Activated CD8-positive, alpha-beta T cell treated with anti-CD3 and anti-CD28 coated beads for 36 hours (primary cell): ENCODE measurements at regions of chr9 and their contacts with region 1.

Region 1: DNA sequence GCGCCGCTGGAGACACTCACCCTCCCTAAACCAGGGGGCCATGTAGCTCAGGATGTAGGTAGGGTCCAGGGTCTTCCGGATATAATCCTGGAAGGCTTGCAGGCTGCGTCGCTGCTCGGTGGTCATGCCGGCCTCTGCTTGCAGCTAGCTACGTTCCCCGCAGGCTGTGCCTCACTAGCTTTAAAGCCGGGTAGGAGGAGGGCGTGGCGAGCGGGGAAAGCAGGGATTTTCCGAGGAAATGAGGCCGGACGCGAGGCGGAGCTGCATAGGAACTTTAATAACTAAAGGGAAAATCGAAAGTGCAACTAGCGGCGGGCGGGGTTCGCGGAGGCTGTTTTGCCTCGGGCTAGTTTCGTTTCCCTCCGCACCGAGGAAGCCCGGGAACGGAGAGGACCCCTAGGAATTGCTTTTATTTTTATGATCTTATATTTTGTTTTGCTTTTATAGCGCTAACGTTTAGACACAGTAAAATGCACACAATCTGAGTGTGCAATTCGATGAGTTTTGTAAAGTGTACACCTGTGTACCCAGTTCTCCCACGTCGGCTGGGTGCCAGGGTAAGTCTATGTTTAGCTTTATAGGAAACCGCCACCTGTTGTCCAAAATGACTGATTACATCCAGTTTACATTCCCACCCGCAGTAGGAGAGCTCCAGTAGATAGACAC is at the start of gene RIGI:
- DNase-seq: peak; percentile 81
- ATAC-seq: peak; percentile 75
- H3K4me3 Mint-ChIP-seq: peak within 1 kb of the TSS; percentile 85
- H3K27ac Mint-ChIP-seq: peak within 1 kb of the TSS; percentile 85
- H3K4me1 Mint-ChIP-seq: peaks cover 49% of the 10 kb centered on the region
- H3K27me3 Mint-ChIP-seq: no peaks in the 10 kb centered on the region
- CTCF ChIP-seq: peak; percentile 59
- total RNA-seq, gene RIGI: 5.4 to 5.6 TPM

Region 2: DNA sequence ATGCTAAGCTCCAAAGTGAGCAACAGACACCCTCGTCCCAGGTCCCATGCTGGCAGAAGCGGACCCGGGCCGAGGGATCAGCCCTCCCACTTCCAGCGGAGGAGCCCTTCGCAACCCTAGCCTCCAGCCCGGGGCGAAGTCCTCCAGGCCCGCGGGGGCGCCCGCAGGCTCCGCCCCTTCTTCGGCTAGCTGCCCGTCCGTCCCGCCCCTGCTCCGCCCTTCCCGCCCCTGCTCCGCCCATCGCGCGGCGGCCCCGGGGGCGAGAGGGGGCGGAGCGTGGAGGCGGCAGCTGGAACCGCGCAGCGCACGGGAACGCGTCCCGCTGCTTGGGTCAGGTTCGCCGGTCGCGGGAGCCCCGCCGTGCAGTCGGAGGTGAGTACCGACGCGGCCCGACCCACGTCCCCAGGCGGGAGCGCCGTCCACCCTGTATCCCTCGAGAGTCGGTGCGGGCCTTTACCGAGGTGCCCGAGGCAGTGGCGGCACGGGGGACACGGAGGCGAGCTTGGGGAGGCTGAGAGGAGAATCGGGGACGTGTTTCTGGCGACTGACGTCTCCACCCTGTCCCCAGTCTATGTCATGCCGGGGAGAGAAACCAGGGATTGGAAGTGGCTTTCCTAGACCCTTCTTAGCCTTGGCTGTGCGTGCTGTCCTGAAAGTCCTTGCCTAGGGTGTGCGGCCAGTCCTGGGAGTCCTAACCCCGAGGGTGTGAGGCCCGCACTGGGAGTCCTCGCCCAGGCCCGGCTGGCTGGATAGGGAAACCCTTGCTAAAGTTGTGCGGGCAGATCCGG is 141.6 kb before region 1 on chr9 and contains the start of gene ACO1:
- CTCF ChIA-PET with region 1: interaction called, 44 read pairs
- POLR2A ChIA-PET with region 1: no interaction called
- intact Hi-C with region 1: loop called (anchors 1 kb)
- DNase-seq: peak; percentile 83
- ATAC-seq: peak; percentile 97
- H3K4me3 Mint-ChIP-seq: peak within 1 kb of the TSS; percentile 81
- H3K27ac Mint-ChIP-seq: no peak within 1 kb of the TSS
- H3K4me1 Mint-ChIP-seq: peaks cover 17% of the 10 kb centered on the region
- H3K27me3 Mint-ChIP-seq: peaks cover 12% of the 10 kb centered on the region
- CTCF ChIP-seq: no peak
- total RNA-seq, gene ACO1: 15.3 to 15.7 TPM

Region 3: DNA sequence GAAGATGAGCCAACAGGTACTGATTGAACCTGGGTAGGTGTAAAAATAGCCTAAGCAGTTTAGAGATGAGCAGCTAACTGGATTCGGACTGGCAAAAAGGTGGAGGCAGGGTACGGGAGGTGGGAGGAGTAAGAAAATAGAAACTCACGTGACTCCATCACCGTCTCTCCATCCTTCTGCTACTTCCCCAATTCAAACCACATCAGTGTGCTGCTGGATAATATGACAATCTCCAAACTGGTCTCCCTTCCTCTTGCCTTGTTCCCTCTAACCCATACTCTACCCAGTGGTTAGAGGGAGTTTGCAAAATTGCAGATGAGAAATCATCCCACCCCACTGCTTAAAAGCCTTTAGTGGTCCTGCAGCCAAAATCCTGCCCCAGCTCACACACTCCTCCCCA is 42.8 kb before region 1 on chr9:
- CTCF ChIA-PET with region 1: no interaction called
- POLR2A ChIA-PET with region 1: no interaction called
- intact Hi-C with region 1: no loop called
- DNase-seq: no peak
- ATAC-seq: no peak
- H3K4me3 Mint-ChIP-seq: no peak overlapping the region
- H3K27ac Mint-ChIP-seq: no peak overlapping the region
- H3K4me1 Mint-ChIP-seq: no peaks in the 10 kb centered on the region
- H3K27me3 Mint-ChIP-seq: no peaks in the 10 kb centered on the region
- CTCF ChIP-seq: no peak

Region 4: DNA sequence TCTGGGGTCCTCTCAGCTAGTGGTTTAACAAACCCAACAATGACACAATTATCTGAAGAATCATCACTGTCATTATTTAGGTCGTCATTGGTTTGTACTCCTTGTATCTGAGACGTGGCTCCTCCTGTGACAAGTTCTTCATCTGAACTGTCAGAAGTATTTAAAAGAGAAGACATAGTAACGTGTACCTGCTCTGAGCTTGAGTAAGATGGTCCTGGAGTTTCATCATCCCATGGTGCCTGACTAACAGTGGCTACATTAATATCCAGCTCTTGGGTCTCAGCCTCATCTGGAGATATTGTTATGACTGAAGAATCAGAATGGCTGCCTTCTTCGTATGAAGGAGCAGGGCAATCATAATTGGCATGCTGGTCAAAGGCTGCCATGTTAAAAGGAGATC is 16.9 kb after region 1 on chr9:
- CTCF ChIA-PET with region 1: interaction called, 13 read pairs
- POLR2A ChIA-PET with region 1: interaction called, 3 read pairs
- intact Hi-C with region 1: no loop called
- DNase-seq: no peak
- ATAC-seq: no peak
- H3K4me3 Mint-ChIP-seq: no peak overlapping the region
- H3K27ac Mint-ChIP-seq: no peak overlapping the region
- H3K4me1 Mint-ChIP-seq: peaks cover 14% of the 10 kb centered on the region
- H3K27me3 Mint-ChIP-seq: no peaks in the 10 kb centered on the region
- CTCF ChIP-seq: no peak

Region 5: GRCh38 chr9:32550562-32551433 is 24.6 kb after region 1 on chr9:
- CTCF ChIA-PET with region 1: interaction called, 18 read pairs
- POLR2A ChIA-PET with region 1: interaction called, 11 read pairs
- intact Hi-C with region 1: loop called (anchors 2 kb)
- DNase-seq: peak; percentile 95
- ATAC-seq: peak; percentile 72
- H3K4me3 Mint-ChIP-seq: peak overlapping the region; percentile 86
- H3K27ac Mint-ChIP-seq: peak overlapping the region; percentile 100
- H3K4me1 Mint-ChIP-seq: peaks cover 50% of the 10 kb centered on the region
- H3K27me3 Mint-ChIP-seq: no peaks in the 10 kb centered on the region
- CTCF ChIP-seq: no peak

Region 6: GRCh38 chr9:32571969-32572899 is 46.1 kb after region 1 on chr9:
- CTCF ChIA-PET with region 1: interaction called, 18 read pairs
- POLR2A ChIA-PET with region 1: interaction called, 3 read pairs
- intact Hi-C with region 1: loop called (anchors 10 kb)
- DNase-seq: peak; percentile 89
- ATAC-seq: peak; percentile 90
- H3K4me3 Mint-ChIP-seq: peak overlapping the region; percentile 96
- H3K27ac Mint-ChIP-seq: peak overlapping the region; percentile 94
- H3K4me1 Mint-ChIP-seq: peaks cover 29% of the 10 kb centered on the region
- H3K27me3 Mint-ChIP-seq: no peaks in the 10 kb centered on the region
- CTCF ChIP-seq: peak; percentile 83